ENCODE measurements at regions of chr3 and their contacts with region 1.

Region 1: DNA sequence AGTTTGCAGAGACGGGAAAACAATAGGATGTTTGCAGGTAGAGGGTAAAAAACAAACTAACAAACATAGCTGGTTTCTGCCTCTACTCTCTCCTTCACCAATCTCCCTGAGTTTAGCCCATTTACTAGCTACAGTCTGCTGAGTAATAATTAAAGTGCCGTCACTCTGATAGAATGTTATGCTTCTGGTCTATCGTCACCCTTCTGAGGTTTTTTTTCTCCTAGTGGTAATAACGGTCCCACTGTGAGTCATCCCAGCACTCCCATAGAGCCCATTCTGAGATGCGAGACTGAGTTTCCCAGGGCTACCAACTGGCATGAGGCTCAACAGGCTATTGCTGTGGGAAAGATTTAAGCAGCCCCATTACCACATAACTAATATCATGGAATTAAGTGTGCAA is 56.4 kb downstream of the PLAAT1 start:
- DNase-seq: no peak
- ATAC-seq: no peak
- H3K4me3 ChIP-seq: no peak overlapping the region
- H3K27ac ChIP-seq: no peak overlapping the region
- H3K4me1 ChIP-seq: no peaks in the 10 kb centered on the region
- H3K27me3 ChIP-seq: no peaks in the 10 kb centered on the region
- CTCF ChIP-seq: no peak

Region 2: GRCh38 chr3:193253986-193254660 is 43.3 kb before region 1 on chr3:
- intact Hi-C with region 1: loop called in 1 of 10 experiments (anchors 1 kb)
- DNase-seq: no peak
- ATAC-seq: no peak
- H3K4me3 ChIP-seq: no peak overlapping the region
- H3K27ac ChIP-seq: no peak overlapping the region
- H3K4me1 ChIP-seq: no peaks in the 10 kb centered on the region
- H3K27me3 ChIP-seq: peaks cover 0 to 7% (median 0%) of the 10 kb centered on the region in 7 donors
- CTCF ChIP-seq: peak in 1 of 9 donors; percentile 24

Measured in heart right ventricle (tissue), 16 donors.